ENCODE measurements at regions of chr13 and their contacts with region 1.

Region 1: GRCh38 chr13:36736119-36736726 is 62.4 kb downstream of the SERTM1 start:
- DNase-seq: no peak
- H3K4me3 ChIP-seq: no peak overlapping the region
- H3K27ac ChIP-seq: no peak overlapping the region
- H3K4me1 ChIP-seq: no peaks in the 10 kb centered on the region
- H3K27me3 ChIP-seq: no peaks in the 10 kb centered on the region
- CTCF ChIP-seq: peak; percentile 59 to 71 (median 60)
- POLR2A ChIP-seq: no peak

Region 2: GRCh38 chr13:37375724-37376123 is 639.5 kb after region 1 on chr13:
- intact Hi-C with region 1: loop called (anchors 5 kb)
- DNase-seq: no peak
- H3K4me3 ChIP-seq: no peak overlapping the region
- H3K27ac ChIP-seq: no peak overlapping the region
- H3K4me1 ChIP-seq: no peaks in the 10 kb centered on the region
- H3K27me3 ChIP-seq: no peaks in the 10 kb centered on the region
- CTCF ChIP-seq: no peak
- POLR2A ChIP-seq: no peak

Measured in breast epithelium (tissue), 4 donors.